Right ventricle myocardium superior (tissue), 1 donor: ENCODE measurements at regions of chr6 and their contacts with region 1.

Region 1: GRCh38 chr6:2999618-3000557 is at the start of gene NQO2:
- DNase-seq: peak; percentile 96
- ATAC-seq: peak; percentile 95
- total RNA-seq, gene NQO2: 70.5 TPM

Region 2: GRCh38 chr6:3057063-3057770 is 57.3 kb after region 1 on chr6:
- intact Hi-C with region 1: loop called (anchors 2 kb)
- DNase-seq: no peak
- ATAC-seq: no peak

Region 3: GRCh38 chr6:3125815-3126214 is 125.9 kb after region 1 on chr6:
- intact Hi-C with region 1: no loop called
- DNase-seq: no peak
- ATAC-seq: no peak